ENCODE measurements at regions of chr13 and their contacts with region 1.

Region 1: GRCh38 chr13:80342471-80343380 is 1.8 kb upstream of the SPRY2 start:
- DNase-seq: peak; percentile 74
- ATAC-seq: peak; percentile 50
- H3K4me3 Mint-ChIP-seq: peak overlapping the region; percentile 82
- H3K27ac Mint-ChIP-seq: no peak overlapping the region
- H3K4me1 Mint-ChIP-seq: peaks cover 26% of the 10 kb centered on the region
- H3K27me3 Mint-ChIP-seq: peaks cover 10% of the 10 kb centered on the region
- CTCF ChIP-seq: no peak

Region 2: DNA sequence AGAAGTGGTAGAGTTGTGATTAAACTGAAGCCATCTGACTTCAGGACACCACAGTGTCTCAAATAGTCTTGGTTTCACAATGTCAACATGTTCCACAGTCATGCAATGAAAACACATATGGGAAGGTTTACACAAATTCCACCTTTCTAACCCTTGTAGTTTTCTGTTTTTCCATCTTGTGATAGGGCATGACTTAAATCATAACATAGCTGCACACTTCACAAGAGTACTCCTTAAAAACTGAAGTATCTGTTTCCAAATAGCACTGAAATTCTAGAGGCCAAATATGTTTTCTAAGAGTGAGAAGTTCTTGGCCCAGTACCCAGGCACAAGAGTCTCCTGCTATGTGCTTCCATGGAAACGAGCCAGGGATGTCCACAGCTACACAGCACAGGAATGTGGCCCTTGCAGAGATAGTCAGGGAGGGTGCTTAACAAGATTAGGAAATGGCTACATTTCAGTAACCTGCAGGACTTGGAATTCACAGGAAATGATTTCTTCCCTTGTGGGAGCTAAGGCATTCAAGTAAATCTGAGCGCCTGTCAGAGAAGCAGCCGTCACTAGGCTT is 592.7 kb before region 1 on chr13:
- CTCF ChIA-PET with region 1: no interaction called
- POLR2A ChIA-PET with region 1: no interaction called
- intact Hi-C with region 1: no loop called
- DNase-seq: no peak
- ATAC-seq: no peak
- H3K4me3 Mint-ChIP-seq: no peak overlapping the region
- H3K27ac Mint-ChIP-seq: no peak overlapping the region
- H3K4me1 Mint-ChIP-seq: no peaks in the 10 kb centered on the region
- H3K27me3 Mint-ChIP-seq: no peaks in the 10 kb centered on the region
- CTCF ChIP-seq: no peak

Region 3: DNA sequence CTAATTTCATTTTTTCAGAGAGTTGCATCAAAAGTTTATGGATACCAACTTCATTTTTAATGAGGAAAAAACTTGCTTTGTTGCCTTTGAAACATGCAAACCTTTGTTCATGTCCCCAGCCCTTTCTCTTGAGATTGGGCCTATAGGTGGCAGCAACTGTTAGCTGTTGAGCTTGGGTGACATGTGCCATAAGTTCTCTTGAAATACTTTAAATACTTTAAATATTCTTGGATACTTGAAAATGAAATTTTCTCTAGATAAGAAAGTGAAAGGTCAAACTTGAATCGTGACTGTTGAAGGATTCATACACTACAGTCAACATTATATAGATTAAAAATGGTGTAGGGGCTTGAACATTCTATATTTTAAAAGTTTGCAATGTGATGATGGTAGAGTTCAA is 566.9 kb before region 1 on chr13:
- CTCF ChIA-PET with region 1: interaction called, 3 read pairs
- POLR2A ChIA-PET with region 1: no interaction called
- intact Hi-C with region 1: loop called (anchors 5 kb)
- DNase-seq: no peak
- ATAC-seq: no peak
- H3K4me3 Mint-ChIP-seq: no peak overlapping the region
- H3K27ac Mint-ChIP-seq: no peak overlapping the region
- H3K4me1 Mint-ChIP-seq: no peaks in the 10 kb centered on the region
- H3K27me3 Mint-ChIP-seq: peaks cover 2% of the 10 kb centered on the region
- CTCF ChIP-seq: no peak

Region 4: GRCh38 chr13:79880818-79881217 is 461.9 kb before region 1 on chr13:
- CTCF ChIA-PET with region 1: no interaction called
- POLR2A ChIA-PET with region 1: no interaction called
- intact Hi-C with region 1: no loop called
- DNase-seq: no peak
- ATAC-seq: no peak
- H3K4me3 Mint-ChIP-seq: no peak overlapping the region
- H3K27ac Mint-ChIP-seq: no peak overlapping the region
- H3K4me1 Mint-ChIP-seq: no peaks in the 10 kb centered on the region
- H3K27me3 Mint-ChIP-seq: no peaks in the 10 kb centered on the region
- CTCF ChIP-seq: no peak

Region 5: DNA sequence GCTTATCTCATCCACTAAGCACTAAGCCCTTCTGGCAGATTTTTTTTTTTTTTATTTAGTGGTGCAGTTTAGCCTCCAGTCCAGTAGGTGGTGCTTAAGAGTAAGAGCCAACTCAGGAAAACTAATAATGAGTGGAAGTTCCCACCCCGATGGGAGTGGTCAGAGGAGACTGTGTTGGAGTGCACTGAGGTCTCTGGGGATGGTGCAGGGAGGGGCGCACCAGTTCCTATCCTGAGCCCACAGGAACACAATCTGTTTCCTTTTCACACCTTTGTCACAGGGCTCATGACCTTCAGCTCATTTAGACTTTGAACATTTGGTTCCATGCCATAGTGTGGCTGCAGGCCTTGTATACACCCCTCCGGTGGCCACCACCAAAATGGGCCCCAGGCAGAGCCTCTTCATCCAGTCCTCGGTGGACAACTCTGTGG is 369.2 kb before region 1 on chr13:
- CTCF ChIA-PET with region 1: interaction called, 3 read pairs
- POLR2A ChIA-PET with region 1: no interaction called
- intact Hi-C with region 1: loop called (anchors 5 kb)
- DNase-seq: no peak
- ATAC-seq: peak; percentile 66
- H3K4me3 Mint-ChIP-seq: no peak overlapping the region
- H3K27ac Mint-ChIP-seq: no peak overlapping the region
- H3K4me1 Mint-ChIP-seq: no peaks in the 10 kb centered on the region
- H3K27me3 Mint-ChIP-seq: no peaks in the 10 kb centered on the region
- CTCF ChIP-seq: no peak

Region 6: GRCh38 chr13:80363890-80364503 is 21.3 kb after region 1 on chr13:
- CTCF ChIA-PET with region 1: interaction called, 5 read pairs
- POLR2A ChIA-PET with region 1: no interaction called
- intact Hi-C with region 1: loop called (anchors 2 kb)
- DNase-seq: no peak
- ATAC-seq: no peak
- H3K4me3 Mint-ChIP-seq: no peak overlapping the region
- H3K27ac Mint-ChIP-seq: no peak overlapping the region
- H3K4me1 Mint-ChIP-seq: peaks cover 2% of the 10 kb centered on the region
- H3K27me3 Mint-ChIP-seq: no peaks in the 10 kb centered on the region
- CTCF ChIP-seq: no peak

Region 7: GRCh38 chr13:80408270-80408669 is 65.5 kb after region 1 on chr13:
- CTCF ChIA-PET with region 1: no interaction called
- POLR2A ChIA-PET with region 1: interaction called, 10 read pairs
- intact Hi-C with region 1: no loop called
- DNase-seq: no peak
- ATAC-seq: no peak
- H3K4me3 Mint-ChIP-seq: no peak overlapping the region
- H3K27ac Mint-ChIP-seq: no peak overlapping the region
- H3K4me1 Mint-ChIP-seq: peaks cover 6% of the 10 kb centered on the region
- H3K27me3 Mint-ChIP-seq: no peaks in the 10 kb centered on the region
- CTCF ChIP-seq: no peak

Region 8: DNA sequence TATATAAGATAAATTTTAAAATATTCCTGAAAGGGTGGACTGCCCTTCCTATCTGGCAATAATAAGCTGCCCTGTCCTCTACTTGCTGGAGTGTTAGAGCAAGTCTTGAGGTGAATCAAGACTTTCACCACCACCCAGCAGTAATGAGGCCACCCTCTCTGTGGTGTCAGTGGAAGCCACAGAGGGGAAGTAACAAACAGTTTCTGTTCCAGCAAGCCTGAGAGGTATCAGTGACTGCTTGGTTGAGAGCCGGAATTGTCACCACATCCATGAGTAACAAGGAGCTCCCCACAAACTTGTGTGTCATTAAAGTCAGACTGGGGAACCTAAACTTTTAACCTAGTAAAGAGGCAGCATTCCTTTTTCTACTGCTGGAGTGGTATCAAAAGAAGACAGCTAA is 530.9 kb after region 1 on chr13:
- CTCF ChIA-PET with region 1: no interaction called
- POLR2A ChIA-PET with region 1: no interaction called
- intact Hi-C with region 1: loop called (anchors 10 kb)
- DNase-seq: no peak
- ATAC-seq: peak; percentile 50
- H3K4me3 Mint-ChIP-seq: no peak overlapping the region
- H3K27ac Mint-ChIP-seq: no peak overlapping the region
- H3K4me1 Mint-ChIP-seq: peaks cover 3% of the 10 kb centered on the region
- H3K27me3 Mint-ChIP-seq: no peaks in the 10 kb centered on the region
- CTCF ChIP-seq: no peak

Region 9: DNA sequence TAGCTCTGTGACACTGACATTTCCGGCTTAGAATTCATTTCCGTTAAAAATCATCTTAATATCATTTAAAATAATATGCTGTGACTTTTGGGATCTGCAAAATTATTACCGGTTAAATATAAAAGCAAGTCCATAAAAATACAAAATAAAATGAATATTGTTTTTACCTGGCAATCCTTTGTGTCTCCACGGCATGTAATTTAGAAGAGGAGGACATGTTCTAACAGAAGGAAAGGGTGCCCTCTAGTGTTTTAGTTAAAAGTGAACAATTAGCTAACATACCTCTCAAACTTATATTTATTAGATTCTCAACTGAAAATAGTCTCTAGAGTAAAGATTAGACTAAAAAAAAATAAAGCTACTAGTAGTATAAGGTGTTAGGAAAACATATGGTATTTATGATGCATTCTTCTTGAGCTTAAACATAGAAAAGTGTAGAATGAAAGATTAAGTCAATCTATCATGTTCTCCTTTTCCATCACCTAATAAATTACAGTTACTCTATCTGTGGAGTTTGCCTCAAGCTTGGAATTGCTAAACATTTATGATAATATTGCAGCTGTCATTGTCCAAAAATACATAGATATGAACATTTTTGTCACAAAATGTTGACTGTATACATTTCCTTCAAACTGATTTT is 674.9 kb after region 1 on chr13:
- CTCF ChIA-PET with region 1: interaction called, 14 read pairs
- POLR2A ChIA-PET with region 1: no interaction called
- intact Hi-C with region 1: no loop called
- DNase-seq: no peak
- ATAC-seq: no peak
- H3K4me3 Mint-ChIP-seq: no peak overlapping the region
- H3K27ac Mint-ChIP-seq: no peak overlapping the region
- H3K4me1 Mint-ChIP-seq: no peaks in the 10 kb centered on the region
- H3K27me3 Mint-ChIP-seq: no peaks in the 10 kb centered on the region
- CTCF ChIP-seq: no peak

Measured in activated B cell treated with CpG ODN at 0.5 μM for 24 hours (primary cell).